AG04450 (cell line): ENCODE measurements at regions of chr6 and their contacts with region 1.

Region 1: GRCh38 chr6:42315991-42316378 is 98.3 kb upstream of the MRPS10 start:
- DNase-seq: peak; percentile 86
- H3K4me3 ChIP-seq: no peak overlapping the region
- H3K27ac ChIP-seq: peak overlapping the region; percentile 99
- H3K27me3 ChIP-seq: no peaks in the 10 kb centered on the region
- CTCF ChIP-seq: no peak

Region 2: DNA sequence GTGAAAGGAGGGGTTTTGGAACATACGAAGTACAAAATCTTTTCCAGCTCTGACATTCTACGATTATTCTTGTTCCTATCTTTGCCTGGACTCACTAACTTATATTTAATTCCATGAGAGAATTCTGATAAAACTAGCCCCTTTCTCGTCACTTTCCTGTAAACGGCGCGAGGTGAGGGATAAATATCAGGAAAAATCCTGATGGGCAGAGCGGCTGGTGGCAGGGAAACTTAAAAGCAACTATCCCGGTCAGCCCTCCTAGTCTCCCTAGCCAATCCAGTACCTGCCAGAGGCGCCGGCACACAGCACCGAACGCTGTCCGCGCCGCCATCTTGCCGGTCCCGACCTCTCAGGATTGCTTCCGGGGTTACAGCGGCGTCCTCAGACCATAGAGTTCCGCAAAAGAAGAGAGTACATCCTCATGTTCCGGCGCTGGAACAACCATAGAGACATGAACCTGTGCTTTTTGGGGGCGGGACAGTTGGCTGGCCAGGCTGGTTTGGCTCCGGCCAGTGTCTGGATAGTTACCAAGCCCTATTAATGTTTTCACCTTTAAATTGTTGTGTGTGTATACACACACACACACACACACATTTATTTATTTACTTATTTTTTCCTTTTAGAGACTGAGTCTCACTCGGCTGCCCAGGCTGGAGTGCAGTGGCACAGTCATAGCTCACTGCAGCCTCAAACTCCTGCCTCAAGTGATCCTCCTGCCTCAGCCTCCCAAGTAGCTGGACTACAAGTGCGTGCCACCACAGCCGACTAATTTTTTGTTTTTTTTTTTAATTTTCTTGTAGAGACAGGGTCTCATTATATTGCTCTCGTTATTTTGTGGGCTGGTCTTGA is 98.2 kb before region 1 on chr6 and contains the start of gene MRPS10:
- CTCF ChIA-PET with region 1: no interaction called
- POLR2A ChIA-PET with region 1: no interaction called
- DNase-seq: peak; percentile 83
- H3K4me3 ChIP-seq: peak within 1 kb of the TSS; percentile 95
- H3K27ac ChIP-seq: peak within 1 kb of the TSS; percentile 86
- H3K27me3 ChIP-seq: no peaks in the 10 kb centered on the region
- CTCF ChIP-seq: no peak
- polyA plus RNA-seq, gene MRPS10: 45.4 and 63.2 TPM in 2 replicates

Region 3: DNA sequence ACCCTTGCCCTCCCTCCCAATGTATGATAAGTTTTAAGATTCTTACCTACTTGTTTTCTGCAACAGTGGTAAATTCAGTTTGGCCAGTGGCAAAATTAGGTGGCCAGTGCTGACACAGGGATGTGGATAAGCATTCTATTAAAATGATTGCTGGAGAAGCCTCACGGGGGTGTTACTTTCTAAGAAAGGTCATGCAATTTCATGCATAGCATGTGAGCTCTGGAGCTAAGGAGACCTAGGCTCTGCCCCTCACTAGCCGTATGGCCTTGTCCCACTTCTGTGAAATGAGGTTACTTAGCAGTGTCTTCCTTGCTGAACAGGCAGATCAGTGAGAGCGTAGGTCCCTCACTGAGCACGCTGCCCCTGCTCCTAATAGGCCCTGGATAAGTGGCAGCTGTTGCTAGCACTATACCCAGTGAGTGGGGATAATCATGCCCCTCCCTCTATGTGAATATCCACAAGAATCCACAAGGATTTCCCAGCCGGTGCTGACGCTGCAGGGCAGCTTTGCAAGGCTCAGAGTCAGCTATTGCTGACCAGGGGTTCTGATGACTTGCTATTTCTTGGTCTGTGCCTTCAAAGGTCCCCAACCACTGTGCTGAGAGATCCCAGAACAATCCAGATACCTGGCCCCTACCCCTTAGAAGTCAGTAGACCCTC is 11.8 kb before region 1 on chr6:
- CTCF ChIA-PET with region 1: interaction called, 10 read pairs
- POLR2A ChIA-PET with region 1: interaction called, 3 read pairs
- DNase-seq: no peak
- H3K4me3 ChIP-seq: no peak overlapping the region
- H3K27ac ChIP-seq: peak overlapping the region; percentile 47
- H3K27me3 ChIP-seq: no peaks in the 10 kb centered on the region
- CTCF ChIP-seq: no peak